CD4-positive, alpha-beta memory T cell (primary cell): ENCODE measurements at regions of chr14 and their contacts with region 1.

Region 1: GRCh38 chr14:65412032-65412846 is at the start of gene FUT8:
- DNase-seq: peak; percentile 91 to 97 (median 95)
- H3K4me3 ChIP-seq: peak within 1 kb of the TSS; percentile 93 to 97
- H3K4me3 Mint-ChIP-seq: peak within 1 kb of the TSS; percentile 97 to 100 (median 99)
- H3K27ac ChIP-seq: peak within 1 kb of the TSS; percentile 79
- H3K27ac Mint-ChIP-seq: peak within 1 kb of the TSS; percentile 80 to 99 (median 98)
- H3K4me1 ChIP-seq: peaks cover 35% of the 10 kb centered on the region
- H3K4me1 Mint-ChIP-seq: peaks cover 27 to 45% (median 35%) of the 10 kb centered on the region in 4 donors
- H3K27me3 ChIP-seq: no peaks in the 10 kb centered on the region
- H3K27me3 Mint-ChIP-seq: no peaks in the 10 kb centered on the region
- total RNA-seq, gene FUT8: 49.3 to 51.0 TPM

Region 2: DNA sequence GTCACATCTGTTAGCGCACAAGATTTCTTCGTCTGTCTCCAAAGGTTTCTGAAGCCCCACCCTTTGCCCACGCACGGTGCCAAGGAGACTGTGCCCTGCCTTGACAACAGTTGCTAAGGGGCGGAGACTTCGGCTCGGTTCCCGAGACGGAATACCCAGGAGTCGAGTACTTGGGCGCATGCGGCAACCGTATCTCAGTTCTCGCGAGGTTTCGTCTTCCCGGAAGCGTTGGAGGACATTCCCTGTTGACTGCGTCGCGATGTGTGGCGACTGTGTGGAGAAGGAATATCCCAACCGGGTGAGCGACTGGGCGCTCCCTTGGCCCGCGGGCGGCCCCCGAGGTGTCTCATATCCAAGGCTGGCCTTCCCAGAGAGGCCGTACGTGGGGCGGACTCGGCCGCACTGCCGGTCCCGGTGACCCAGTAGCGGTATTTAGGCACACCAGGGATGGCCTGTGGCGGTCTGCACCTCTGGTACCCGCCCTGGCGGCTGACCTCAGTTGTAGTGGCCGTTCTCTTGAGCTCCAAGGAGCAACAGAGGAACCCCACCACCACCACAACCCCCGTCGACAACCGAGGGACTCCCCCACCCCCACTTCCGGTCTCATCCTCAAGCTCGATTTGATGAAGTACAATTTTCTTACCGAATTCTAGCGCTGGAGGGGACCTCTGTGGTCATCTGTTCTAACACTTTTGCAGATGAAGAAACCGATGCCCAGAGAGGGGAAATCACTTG is 497.8 kb before region 1 on chr14 and contains the start of gene CHURC1:
- CTCF ChIA-PET with region 1: no interaction called
- POLR2A ChIA-PET with region 1: interaction called, 3 read pairs
- intact Hi-C with region 1: loop called (anchors 2 kb)
- DNase-seq: peak; percentile 94 to 99 (median 97)
- H3K4me3 ChIP-seq: peak within 1 kb of the TSS; percentile 90 to 99
- H3K4me3 Mint-ChIP-seq: peak within 1 kb of the TSS; percentile 84 to 95 (median 90)
- H3K27ac ChIP-seq: peak within 1 kb of the TSS; percentile 100
- H3K27ac Mint-ChIP-seq: peak within 1 kb of the TSS; percentile 92 to 99 (median 98)
- H3K4me1 ChIP-seq: peaks cover 46% of the 10 kb centered on the region
- H3K4me1 Mint-ChIP-seq: peaks cover 33 to 56% (median 45%) of the 10 kb centered on the region in 4 donors
- H3K27me3 ChIP-seq: no peaks in the 10 kb centered on the region
- H3K27me3 Mint-ChIP-seq: peaks cover 0 to 1% of the 10 kb centered on the region in 2 donors
- total RNA-seq, gene CHURC1: 112 to 116 TPM

Region 3: GRCh38 chr14:65170768-65171507 is 241.3 kb before region 1 on chr14:
- CTCF ChIA-PET with region 1: interaction called, 32 read pairs
- POLR2A ChIA-PET with region 1: interaction called, 27 read pairs
- intact Hi-C with region 1: no loop called
- DNase-seq: peak; percentile 39 to 73 (median 43)
- H3K4me3 ChIP-seq: peak overlapping the region; percentile 39 to 45
- H3K4me3 Mint-ChIP-seq: peak overlapping the region; percentile 79 to 88 (median 83)
- H3K27ac ChIP-seq: no peak overlapping the region
- H3K27ac Mint-ChIP-seq: peak overlapping the region in 6 of 7 donors; percentile 8 to 87 (median 66)
- H3K4me1 ChIP-seq: peaks cover 8% of the 10 kb centered on the region
- H3K4me1 Mint-ChIP-seq: peaks cover 11 to 18% (median 13%) of the 10 kb centered on the region in 4 donors
- H3K27me3 ChIP-seq: no peaks in the 10 kb centered on the region
- H3K27me3 Mint-ChIP-seq: peaks cover 0 to 2% of the 10 kb centered on the region in 2 donors

Region 4: DNA sequence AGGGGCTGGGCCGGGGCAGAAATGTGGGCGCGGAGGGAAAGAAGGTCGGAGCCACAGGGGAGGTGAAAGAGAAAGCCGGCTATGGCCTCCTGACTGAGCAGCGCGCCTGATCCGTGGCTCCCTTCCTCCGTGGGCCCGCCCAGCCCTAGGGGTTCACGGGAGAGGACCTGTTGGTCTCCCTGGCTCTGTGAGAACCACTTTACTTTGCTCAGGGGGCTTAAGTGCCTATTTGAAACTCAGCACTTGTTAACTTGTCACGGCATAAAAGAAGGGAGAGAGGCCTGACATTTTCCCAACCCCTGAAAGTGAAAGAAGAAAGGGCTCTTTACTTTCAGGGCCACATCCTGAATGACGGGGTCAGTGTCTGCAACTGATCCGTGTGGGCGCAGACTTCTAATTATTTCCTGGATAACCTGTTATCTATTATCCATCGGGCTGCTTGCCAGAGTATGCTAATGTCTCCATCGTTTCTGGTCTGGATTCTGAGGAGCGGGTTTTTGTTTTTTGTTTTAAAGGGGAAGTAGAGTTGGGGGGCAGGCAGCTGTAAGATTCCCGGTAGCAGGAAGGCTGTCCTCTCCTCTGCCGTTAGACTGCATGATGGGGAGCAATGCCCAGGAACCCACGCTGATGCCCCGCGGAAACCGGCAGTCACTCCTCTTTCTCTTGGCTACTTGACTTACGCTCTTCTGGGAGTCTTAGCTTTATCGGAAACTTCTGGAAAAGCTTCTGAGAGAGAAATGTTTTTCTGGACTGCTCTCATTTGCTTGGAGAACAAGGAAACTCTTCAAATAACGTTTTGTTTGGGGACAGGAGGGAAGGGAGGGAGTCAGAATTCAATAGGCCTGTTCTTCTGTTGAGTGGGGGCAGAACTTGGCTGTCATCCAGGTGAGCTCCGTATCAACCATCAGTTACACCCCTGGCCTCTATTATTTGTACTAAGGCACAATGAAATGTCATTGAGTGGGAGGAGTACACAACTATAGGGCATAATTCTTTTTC is 182.2 kb before region 1 on chr14:
- CTCF ChIA-PET with region 1: interaction called, 131 read pairs
- POLR2A ChIA-PET with region 1: interaction called, 75 read pairs
- intact Hi-C with region 1: no loop called
- DNase-seq: peak in 3 of 5 donors; percentile 31 to 40 (median 35)
- H3K4me3 ChIP-seq: peak overlapping the region in 1 of 2 donors; percentile 56
- H3K4me3 Mint-ChIP-seq: peak overlapping the region; percentile 88 to 93 (median 92)
- H3K27ac ChIP-seq: peak overlapping the region; percentile 22
- H3K27ac Mint-ChIP-seq: peak overlapping the region; percentile 78 to 98 (median 96)
- H3K4me1 ChIP-seq: peaks cover 12% of the 10 kb centered on the region
- H3K4me1 Mint-ChIP-seq: peaks cover 30 to 66% (median 48%) of the 10 kb centered on the region in 4 donors
- H3K27me3 ChIP-seq: no peaks in the 10 kb centered on the region
- H3K27me3 Mint-ChIP-seq: no peaks in the 10 kb centered on the region

Region 5: GRCh38 chr14:65731933-65732510 is 319.8 kb after region 1 on chr14:
- CTCF ChIA-PET with region 1: no interaction called
- POLR2A ChIA-PET with region 1: no interaction called
- intact Hi-C with region 1: loop called (anchors 5 kb)
- DNase-seq: no peak
- H3K4me3 ChIP-seq: no peak overlapping the region
- H3K4me3 Mint-ChIP-seq: no peak overlapping the region
- H3K27ac ChIP-seq: no peak overlapping the region
- H3K27ac Mint-ChIP-seq: peak overlapping the region in 5 of 7 donors; percentile 10 to 85 (median 65)
- H3K4me1 ChIP-seq: peaks cover 9% of the 10 kb centered on the region
- H3K4me1 Mint-ChIP-seq: peaks cover 10 to 14% (median 12%) of the 10 kb centered on the region in 4 donors
- H3K27me3 ChIP-seq: no peaks in the 10 kb centered on the region
- H3K27me3 Mint-ChIP-seq: no peaks in the 10 kb centered on the region

Region 6: GRCh38 chr14:65847075-65847847 is 435.0 kb after region 1 on chr14:
- CTCF ChIA-PET with region 1: interaction called, 4 read pairs
- POLR2A ChIA-PET with region 1: interaction called, 32 read pairs
- intact Hi-C with region 1: no loop called
- DNase-seq: peak; percentile 88 to 93 (median 90)
- H3K4me3 ChIP-seq: peak overlapping the region; percentile 30 to 43
- H3K4me3 Mint-ChIP-seq: peak overlapping the region; percentile 65 to 90 (median 80)
- H3K27ac ChIP-seq: peak overlapping the region; percentile 57
- H3K27ac Mint-ChIP-seq: peak overlapping the region; percentile 91 to 98 (median 96)
- H3K4me1 ChIP-seq: peaks cover 98% of the 10 kb centered on the region
- H3K4me1 Mint-ChIP-seq: peaks cover 64 to 92% (median 79%) of the 10 kb centered on the region in 4 donors
- H3K27me3 ChIP-seq: no peaks in the 10 kb centered on the region
- H3K27me3 Mint-ChIP-seq: no peaks in the 10 kb centered on the region

Region 7: DNA sequence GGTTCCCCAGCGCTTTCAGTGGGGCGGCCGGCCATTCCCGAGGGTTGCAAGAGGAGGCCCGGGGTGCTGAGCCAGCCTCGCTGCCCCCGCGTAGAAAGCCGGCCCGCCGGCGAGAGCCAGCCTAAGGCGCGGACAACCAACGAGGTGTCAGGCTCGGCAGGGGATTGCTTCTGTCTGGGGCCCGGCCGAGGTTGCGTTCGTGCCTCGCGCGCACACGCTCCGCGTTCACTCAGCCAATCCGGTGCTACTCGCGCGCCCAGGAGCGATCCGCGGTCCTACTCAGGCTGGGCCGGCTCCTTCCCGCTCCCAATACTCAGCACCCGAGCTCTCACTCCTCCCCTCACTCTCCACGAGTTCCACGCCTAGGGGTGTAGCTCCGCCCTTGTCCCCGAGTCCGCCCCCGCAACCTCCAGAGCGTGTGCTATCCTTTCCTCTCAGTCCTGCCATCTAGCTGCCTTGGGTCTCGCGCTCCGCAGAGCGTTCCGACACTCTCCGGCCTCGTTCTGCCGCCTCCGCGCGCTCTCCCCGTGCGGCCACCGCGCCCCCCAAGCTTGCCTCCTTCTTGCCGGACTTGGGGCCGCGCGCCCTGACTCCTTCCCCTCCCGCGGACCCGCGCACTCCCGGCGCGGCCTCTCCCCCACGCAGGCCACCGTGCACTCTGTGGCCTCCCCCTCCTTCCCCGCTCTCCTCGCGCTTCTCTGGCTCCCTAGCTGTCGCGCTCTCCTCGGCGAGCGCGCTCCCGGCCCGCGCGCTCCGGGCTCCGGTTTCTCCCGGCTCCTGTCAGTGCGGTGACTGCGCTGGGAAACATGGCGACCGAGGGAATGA is 1095.7 kb after region 1 on chr14 and contains the start of gene GPHN:
- CTCF ChIA-PET with region 1: no interaction called
- POLR2A ChIA-PET with region 1: no interaction called
- intact Hi-C with region 1: loop called (anchors 5 kb)
- DNase-seq: peak; percentile 85 to 92 (median 89)
- H3K4me3 ChIP-seq: peak within 1 kb of the TSS; percentile 48 to 79
- H3K4me3 Mint-ChIP-seq: peak within 1 kb of the TSS; percentile 98 to 100 (median 99)
- H3K27ac ChIP-seq: peak within 1 kb of the TSS; percentile 73
- H3K27ac Mint-ChIP-seq: peak within 1 kb of the TSS; percentile 92 to 98 (median 95)
- H3K4me1 ChIP-seq: peaks cover 40% of the 10 kb centered on the region
- H3K4me1 Mint-ChIP-seq: peaks cover 18 to 53% (median 32%) of the 10 kb centered on the region in 4 donors
- H3K27me3 ChIP-seq: no peaks in the 10 kb centered on the region
- H3K27me3 Mint-ChIP-seq: no peaks in the 10 kb centered on the region
- total RNA-seq, gene GPHN: 15.5 to 18.8 TPM